Psoas muscle (tissue), 8 donors: ENCODE measurements at regions of chr1 and their contacts with region 1.

Region 1: GRCh38 chr1:150053926-150054325 is 13.7 kb upstream of the VPS45 start:
- DNase-seq: no peak
- ATAC-seq: no peak
- H3K4me3 ChIP-seq: no peak overlapping the region
- H3K27ac ChIP-seq: no peak overlapping the region
- H3K4me1 ChIP-seq: peaks cover 9% of the 10 kb centered on the region
- H3K27me3 ChIP-seq: no peaks in the 10 kb centered on the region
- CTCF ChIP-seq: no peak

Region 2: DNA sequence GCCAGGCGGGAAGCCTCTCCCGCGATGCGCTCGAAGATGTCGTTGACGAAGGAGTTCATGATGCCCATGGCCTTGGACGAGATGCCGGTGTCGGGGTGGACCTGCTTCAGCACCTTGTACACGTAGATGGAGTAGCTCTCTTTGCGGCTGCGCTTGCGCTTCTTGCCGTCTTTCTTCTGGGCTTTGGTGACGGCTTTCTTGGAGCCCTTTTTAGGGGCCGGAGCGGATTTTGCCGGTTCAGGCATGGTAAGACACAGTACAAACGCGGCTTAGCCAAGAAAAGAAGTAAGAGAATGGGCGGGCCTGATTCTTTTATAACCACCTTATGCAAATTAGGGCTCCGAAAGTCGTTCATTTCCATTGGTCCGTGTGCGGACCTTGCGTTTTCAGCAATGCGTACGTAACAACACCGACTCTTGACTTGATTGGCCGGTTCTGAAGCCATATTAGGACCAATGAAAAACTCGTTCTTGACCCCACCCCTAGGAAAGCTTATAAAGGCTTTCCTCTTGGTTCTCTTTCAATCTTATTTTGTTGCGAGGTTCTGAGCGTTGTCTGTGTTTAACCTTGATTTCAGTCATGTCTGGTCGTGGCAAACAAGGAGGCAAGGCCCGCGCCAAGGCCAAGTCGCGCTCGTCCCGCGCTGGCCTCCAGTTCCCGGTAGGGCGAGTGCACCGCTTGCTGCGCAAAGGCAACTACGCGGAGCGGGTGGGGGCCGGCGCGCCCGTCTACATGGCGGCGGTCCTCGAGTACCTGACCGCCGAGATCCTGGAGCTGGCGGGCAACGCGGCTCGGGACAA is 167.3 kb before region 1 on chr1:
- intact Hi-C with region 1: loop called in 1 of 2 experiments (anchors 10 kb)
- DNase-seq: peak; percentile 76 to 88
- ATAC-seq: peak; percentile 80 to 84 (median 81)
- H3K4me3 ChIP-seq: peak overlapping the region; percentile 79
- H3K27ac ChIP-seq: peak overlapping the region; percentile 98
- H3K4me1 ChIP-seq: peaks cover 19% of the 10 kb centered on the region
- H3K27me3 ChIP-seq: no peaks in the 10 kb centered on the region
- CTCF ChIP-seq: no peak

Region 3: DNA sequence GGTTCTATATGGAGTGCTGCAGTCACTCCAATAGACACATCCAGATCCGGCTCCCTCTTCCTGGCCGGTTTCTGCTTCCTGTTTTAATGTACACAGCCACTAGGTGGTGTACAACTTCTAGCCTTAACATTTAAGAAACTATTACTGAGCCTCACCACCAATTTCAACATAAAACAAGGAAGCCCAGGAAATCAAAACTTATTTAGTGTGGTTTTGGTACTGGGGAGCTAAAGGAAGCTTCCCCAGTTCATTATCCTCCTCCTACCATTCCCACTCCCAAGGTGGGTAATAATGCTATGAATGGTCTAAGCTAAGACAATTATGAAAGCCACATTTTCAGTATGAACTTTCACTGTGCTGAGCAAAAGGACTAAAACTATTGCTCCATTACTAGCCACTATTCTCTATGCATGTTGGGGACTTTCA is 91.8 kb before region 1 on chr1:
- intact Hi-C with region 1: loop called (anchors 1 to 2 kb)
- DNase-seq: no peak
- ATAC-seq: peak; percentile 84 to 91 (median 88)
- H3K4me3 ChIP-seq: no peak overlapping the region
- H3K27ac ChIP-seq: peak overlapping the region; percentile 42
- H3K4me1 ChIP-seq: no peaks in the 10 kb centered on the region
- H3K27me3 ChIP-seq: no peaks in the 10 kb centered on the region
- CTCF ChIP-seq: peak; percentile 83

Region 4: DNA sequence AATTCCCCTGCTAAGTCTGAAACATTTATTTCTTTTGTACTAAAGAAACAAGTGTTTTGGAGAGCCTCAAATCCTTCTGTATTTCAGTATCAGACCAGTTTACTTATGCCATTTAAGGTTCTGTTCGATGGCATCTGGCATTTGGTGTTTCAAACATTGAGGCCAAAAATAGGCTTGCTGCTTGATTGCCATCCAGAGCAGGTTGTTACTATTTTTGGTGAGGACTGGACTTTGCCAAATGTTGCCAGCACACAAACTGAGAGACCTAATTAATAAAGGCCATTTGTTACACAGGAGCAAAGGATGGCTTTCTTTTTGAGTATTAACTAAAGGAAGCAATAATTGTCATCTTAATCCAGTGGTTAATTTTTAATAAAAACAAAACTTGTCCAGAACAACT is 39.9 kb after region 1 on chr1:
- intact Hi-C with region 1: no loop called
- DNase-seq: no peak
- ATAC-seq: peak in 3 of 4 donors; percentile 70 to 91 (median 86)
- H3K4me3 ChIP-seq: no peak overlapping the region
- H3K27ac ChIP-seq: peak overlapping the region; percentile 59
- H3K4me1 ChIP-seq: peaks cover 9% of the 10 kb centered on the region
- H3K27me3 ChIP-seq: no peaks in the 10 kb centered on the region
- CTCF ChIP-seq: no peak